ENCODE measurements at regions of chr3 and their contacts with region 1.

Region 1: DNA sequence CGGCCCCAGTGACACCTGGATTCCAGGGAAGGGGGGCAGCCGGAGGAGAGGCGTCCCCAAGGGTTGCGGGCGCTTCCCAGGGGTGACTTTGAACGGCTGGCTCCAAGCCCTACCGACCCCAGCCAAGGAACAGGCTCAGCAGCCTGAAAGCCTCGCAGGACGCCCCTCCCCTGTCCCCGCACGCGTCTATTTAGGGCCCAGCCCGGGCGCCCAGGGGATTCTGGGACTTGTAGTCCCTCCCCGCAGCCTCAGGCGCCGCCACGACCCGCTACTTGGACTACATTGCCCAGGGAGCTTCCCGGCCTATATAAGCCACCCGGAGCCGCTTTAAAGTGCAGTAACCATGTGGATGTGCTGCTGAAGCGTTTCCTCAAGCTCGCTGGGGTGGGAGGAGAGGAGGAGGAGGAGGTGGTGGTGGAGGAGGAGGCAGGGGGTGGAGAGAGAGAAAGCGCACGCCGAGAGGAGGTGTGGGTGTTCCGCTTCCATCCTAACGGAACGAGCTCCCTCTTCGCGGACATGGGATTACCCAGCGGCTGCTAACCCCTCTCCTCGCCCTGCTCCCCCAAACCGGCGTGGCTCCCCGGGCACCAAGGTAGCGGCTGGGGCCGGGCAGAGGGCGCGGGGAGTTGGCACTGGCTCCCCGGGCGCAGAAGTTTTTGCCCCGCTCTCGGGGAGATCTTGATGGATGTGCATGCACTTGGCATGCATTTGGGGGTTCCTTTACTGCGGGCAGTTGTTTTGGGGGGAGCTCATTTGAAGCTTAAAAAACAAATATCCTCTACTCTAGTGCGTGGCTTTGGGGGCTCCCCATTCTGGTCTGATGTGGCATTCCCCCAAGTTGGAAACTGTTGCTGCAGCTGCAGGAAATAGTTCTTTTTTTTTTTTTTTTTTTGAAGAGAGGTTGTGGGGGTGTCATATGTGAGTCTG is at the start of gene ITPR1:
- DNase-seq: peak; percentile 94 to 99 (median 98)
- ATAC-seq: peak; percentile 86 to 94 (median 90)
- H3K4me3 ChIP-seq: peak within 1 kb of the TSS; percentile 83 to 88
- H3K4me3 Mint-ChIP-seq: peak within 1 kb of the TSS; percentile 97 to 98 (median 97)
- H3K27ac ChIP-seq: peak within 1 kb of the TSS; percentile 64
- H3K27ac Mint-ChIP-seq: peak within 1 kb of the TSS; percentile 90 to 94
- H3K4me1 ChIP-seq: peaks cover 16 to 30% of the 10 kb centered on the region in 2 experiments
- H3K4me1 Mint-ChIP-seq: peaks cover 43 to 61% (median 47%) of the 10 kb centered on the region in 3 donors
- H3K27me3 ChIP-seq: no peaks in the 10 kb centered on the region
- H3K27me3 Mint-ChIP-seq: peaks cover 0 to 3% of the 10 kb centered on the region in 2 donors
- total RNA-seq, gene ITPR1: 53.8 to 105 (median 73.1) TPM

Region 2: GRCh38 chr3:3015185-3016089 is 1477.8 kb before region 1 on chr3:
- CTCF ChIA-PET with region 1: interaction called in 1 of 2 experiments, 12 read pairs
- POLR2A ChIA-PET with region 1: no interaction called
- DNase-seq: peak in 1 of 35 experiments; percentile 9
- ATAC-seq: no peak
- H3K4me3 ChIP-seq: no peak overlapping the region
- H3K4me3 Mint-ChIP-seq: no peak overlapping the region
- H3K27ac ChIP-seq: no peak overlapping the region
- H3K27ac Mint-ChIP-seq: no peak overlapping the region
- H3K4me1 ChIP-seq: no peaks in the 10 kb centered on the region
- H3K4me1 Mint-ChIP-seq: no peaks in the 10 kb centered on the region
- H3K27me3 ChIP-seq: no peaks in the 10 kb centered on the region
- H3K27me3 Mint-ChIP-seq: peaks cover 21 to 41% of the 10 kb centered on the region in 2 donors

Region 3: GRCh38 chr3:3851621-3852323 is 641.5 kb before region 1 on chr3:
- CTCF ChIA-PET with region 1: no interaction called
- POLR2A ChIA-PET with region 1: no interaction called
- DNase-seq: no peak
- ATAC-seq: no peak
- H3K4me3 ChIP-seq: no peak overlapping the region
- H3K4me3 Mint-ChIP-seq: no peak overlapping the region
- H3K27ac ChIP-seq: no peak overlapping the region
- H3K27ac Mint-ChIP-seq: no peak overlapping the region
- H3K4me1 ChIP-seq: no peaks in the 10 kb centered on the region
- H3K4me1 Mint-ChIP-seq: no peaks in the 10 kb centered on the region
- H3K27me3 ChIP-seq: no peaks in the 10 kb centered on the region
- H3K27me3 Mint-ChIP-seq: no peaks in the 10 kb centered on the region

Region 4: GRCh38 chr3:4310971-4311370 is 182.3 kb before region 1 on chr3:
- CTCF ChIA-PET with region 1: no interaction called
- POLR2A ChIA-PET with region 1: interaction called in 1 of 2 experiments, 10 read pairs
- DNase-seq: no peak
- ATAC-seq: no peak
- H3K4me3 ChIP-seq: no peak overlapping the region
- H3K4me3 Mint-ChIP-seq: no peak overlapping the region
- H3K27ac ChIP-seq: no peak overlapping the region
- H3K27ac Mint-ChIP-seq: peak overlapping the region in 1 of 2 donors; percentile 28
- H3K4me1 ChIP-seq: peaks cover 0 to under 1% of the 10 kb centered on the region in 2 experiments
- H3K4me1 Mint-ChIP-seq: peaks cover 12 to 21% (median 16%) of the 10 kb centered on the region in 3 donors
- H3K27me3 ChIP-seq: no peaks in the 10 kb centered on the region
- H3K27me3 Mint-ChIP-seq: no peaks in the 10 kb centered on the region

Region 5: DNA sequence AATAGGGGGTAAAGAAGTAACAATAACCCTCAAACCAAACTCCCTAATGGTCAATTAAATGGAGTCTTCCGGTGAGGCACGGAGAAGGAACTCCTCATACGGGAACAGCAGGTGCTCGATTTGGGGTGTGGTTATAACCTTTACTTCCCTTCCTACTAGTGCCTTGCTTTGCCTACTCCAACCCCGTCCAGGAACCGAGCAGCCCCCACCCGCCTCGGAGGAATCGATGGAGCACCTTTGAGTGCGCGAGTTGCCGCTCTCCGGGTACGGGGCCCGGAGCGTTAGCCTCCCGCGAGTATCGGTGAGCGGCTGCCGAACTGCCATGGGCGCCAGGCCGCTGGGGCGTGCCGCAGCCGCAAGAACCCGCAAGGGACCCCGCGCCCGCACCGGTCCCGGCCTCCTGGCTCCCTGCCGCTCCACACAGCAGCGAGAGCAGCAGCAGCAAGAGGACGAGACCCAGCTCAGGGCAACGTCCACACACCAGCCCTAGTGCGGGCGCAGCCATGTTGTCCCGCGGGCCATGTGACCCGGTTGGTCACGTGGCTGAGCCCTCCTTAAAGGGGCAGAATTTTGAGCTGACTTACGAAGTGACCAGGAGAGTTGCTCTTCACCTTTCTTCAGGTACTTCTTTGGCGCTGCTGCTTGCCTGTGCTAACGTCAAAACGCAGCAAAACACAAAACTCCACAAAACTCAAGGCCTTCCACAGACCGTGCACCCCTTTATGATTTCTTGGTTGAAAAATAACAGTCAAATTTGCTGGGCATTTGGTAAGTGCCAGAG is 26.3 kb before region 1 on chr3 and contains the start of gene SUMF1:
- CTCF ChIA-PET with region 1: interaction called, 8 to 11 read pairs
- POLR2A ChIA-PET with region 1: interaction called, 6 to 27 read pairs
- DNase-seq: peak; percentile 42 to 82 (median 63)
- ATAC-seq: peak; percentile 93 to 99 (median 97)
- H3K4me3 ChIP-seq: peak within 1 kb of the TSS; percentile 76 to 83
- H3K4me3 Mint-ChIP-seq: peak within 1 kb of the TSS; percentile 85 to 93 (median 92)
- H3K27ac ChIP-seq: peak within 1 kb of the TSS; percentile 65
- H3K27ac Mint-ChIP-seq: peak within 1 kb of the TSS; percentile 93 to 94
- H3K4me1 ChIP-seq: peaks cover 4 to 15% of the 10 kb centered on the region in 2 experiments
- H3K4me1 Mint-ChIP-seq: peaks cover 22 to 34% (median 27%) of the 10 kb centered on the region in 3 donors
- H3K27me3 ChIP-seq: peaks cover 0 to 5% of the 10 kb centered on the region in 2 experiments
- H3K27me3 Mint-ChIP-seq: peaks cover under 1% of the 10 kb centered on the region in 2 donors
- total RNA-seq, gene SUMF1: 15.5 to 20.8 (median 17.2) TPM

Region 6: DNA sequence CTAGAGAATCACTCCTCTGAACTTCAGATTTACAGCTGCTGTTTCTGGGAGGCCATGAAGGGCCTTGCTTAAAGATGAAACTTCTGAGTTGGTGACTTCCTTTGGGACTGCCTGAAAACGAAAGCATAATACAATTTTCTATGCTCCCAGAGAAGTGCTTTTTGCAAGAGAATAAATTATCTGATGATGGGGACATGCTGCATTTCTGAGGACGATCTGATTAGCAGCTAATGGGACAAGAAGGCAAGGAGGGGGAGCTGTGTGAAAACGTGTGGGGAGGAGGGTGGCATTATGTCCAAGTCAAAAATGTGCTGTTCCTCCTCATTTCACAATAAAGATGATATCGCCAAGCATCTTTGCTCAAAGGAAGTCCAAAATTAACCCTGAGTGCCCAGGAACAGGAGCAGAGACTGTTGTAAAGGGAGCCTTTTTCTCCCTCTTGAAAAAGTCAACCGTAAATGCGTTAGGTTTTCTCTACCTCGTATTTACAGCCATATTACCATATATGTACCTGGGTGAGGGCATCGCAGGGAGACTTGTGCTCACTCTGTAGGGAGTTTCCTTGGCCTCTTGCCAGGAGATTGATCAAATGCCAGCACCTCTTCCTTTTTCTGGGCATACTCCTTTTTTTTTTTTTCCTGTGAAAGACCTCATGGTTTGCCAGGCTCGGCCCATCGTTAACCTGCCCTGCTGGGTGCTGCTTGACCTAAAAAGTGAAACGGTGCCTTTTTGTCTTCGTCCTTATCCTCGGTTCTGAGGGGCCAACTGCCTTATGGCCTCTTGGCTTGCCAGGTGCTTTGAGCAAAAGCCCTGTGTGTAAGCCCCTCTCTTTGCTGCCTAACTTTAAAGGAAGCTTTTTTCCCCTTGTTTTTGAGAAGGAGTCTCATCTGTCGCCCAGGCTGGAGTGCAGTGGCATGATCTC is 11.3 kb after region 1 on chr3:
- CTCF ChIA-PET with region 1: interaction called, 8 to 11 read pairs
- POLR2A ChIA-PET with region 1: interaction called, 16 to 29 read pairs
- DNase-seq: peak in 22 of 35 experiments; percentile 12 to 82 (median 25)
- ATAC-seq: peak; percentile 81 to 89 (median 82)
- H3K4me3 ChIP-seq: peak overlapping the region; percentile 44 to 49
- H3K4me3 Mint-ChIP-seq: peak overlapping the region; percentile 0 to 84 (median 82)
- H3K27ac ChIP-seq: peak overlapping the region; percentile 89
- H3K27ac Mint-ChIP-seq: peak overlapping the region; percentile 98
- H3K4me1 ChIP-seq: peaks cover 9 to 27% of the 10 kb centered on the region in 2 experiments
- H3K4me1 Mint-ChIP-seq: peaks cover 22 to 65% (median 51%) of the 10 kb centered on the region in 3 donors
- H3K27me3 ChIP-seq: no peaks in the 10 kb centered on the region
- H3K27me3 Mint-ChIP-seq: no peaks in the 10 kb centered on the region

Region 7: GRCh38 chr3:4517643-4518311 is 24.5 kb after region 1 on chr3:
- CTCF ChIA-PET with region 1: interaction called, 12 to 49 read pairs
- POLR2A ChIA-PET with region 1: interaction called, 12 to 35 read pairs
- DNase-seq: no peak
- ATAC-seq: peak in 2 of 4 experiments; percentile 14 to 35
- H3K4me3 ChIP-seq: no peak overlapping the region
- H3K4me3 Mint-ChIP-seq: peak overlapping the region in 1 of 3 donors; percentile 63
- H3K27ac ChIP-seq: peak overlapping the region; percentile 85
- H3K27ac Mint-ChIP-seq: peak overlapping the region; percentile 76 to 90
- H3K4me1 ChIP-seq: peaks cover 15 to 25% of the 10 kb centered on the region in 2 experiments
- H3K4me1 Mint-ChIP-seq: peaks cover 47 to 50% (median 48%) of the 10 kb centered on the region in 3 donors
- H3K27me3 ChIP-seq: no peaks in the 10 kb centered on the region
- H3K27me3 Mint-ChIP-seq: no peaks in the 10 kb centered on the region

Region 8: DNA sequence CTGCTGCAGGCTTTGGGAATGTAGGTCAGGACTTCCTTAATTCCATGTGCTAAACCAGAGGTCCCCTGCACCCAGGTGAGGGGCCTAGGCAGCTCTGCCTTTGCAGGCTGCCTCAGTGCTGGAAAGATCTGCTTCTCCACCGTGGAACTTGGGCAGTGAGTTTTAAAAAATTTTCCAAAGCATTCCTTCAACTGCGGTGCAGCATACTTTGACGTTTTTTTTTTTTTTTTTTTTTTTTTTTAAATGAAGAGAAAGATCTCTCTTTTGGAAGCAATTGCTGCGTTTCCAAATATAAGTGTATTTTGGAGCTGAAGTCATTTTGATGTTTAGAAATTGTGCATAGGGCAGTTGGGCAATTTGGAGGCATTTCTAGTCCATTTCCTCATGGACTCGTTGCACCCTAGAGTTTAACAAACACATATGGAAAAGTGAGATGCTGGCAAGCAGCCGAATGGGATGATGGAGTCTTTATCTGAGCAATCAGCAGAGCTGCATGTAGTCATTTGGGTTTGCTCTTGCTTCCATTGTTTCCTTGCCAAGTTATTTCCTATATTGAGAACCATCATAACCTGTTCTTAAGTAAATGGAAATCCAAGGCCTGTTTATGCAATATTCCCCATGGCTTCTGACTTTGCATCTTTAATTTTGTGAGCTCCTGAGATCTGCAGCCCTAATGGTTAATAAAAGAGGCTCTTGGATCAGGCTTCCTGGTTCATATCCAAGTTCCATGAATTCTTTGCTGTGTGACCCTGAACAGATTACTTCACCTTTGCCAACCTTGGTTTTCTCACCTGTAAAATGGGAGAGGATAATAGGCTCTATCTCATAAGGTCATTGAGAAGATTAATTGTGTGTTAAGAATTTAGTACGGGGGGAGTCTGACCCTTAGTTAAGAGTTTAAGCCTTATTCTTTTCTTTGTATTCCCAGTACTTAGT is 31.1 kb after region 1 on chr3:
- CTCF ChIA-PET with region 1: interaction called, 12 to 49 read pairs
- POLR2A ChIA-PET with region 1: interaction called, 12 to 35 read pairs
- DNase-seq: no peak
- ATAC-seq: no peak
- H3K4me3 ChIP-seq: no peak overlapping the region
- H3K4me3 Mint-ChIP-seq: no peak overlapping the region
- H3K27ac ChIP-seq: no peak overlapping the region
- H3K27ac Mint-ChIP-seq: no peak overlapping the region
- H3K4me1 ChIP-seq: peaks cover under 1 to 4% of the 10 kb centered on the region in 2 experiments
- H3K4me1 Mint-ChIP-seq: peaks cover 18 to 33% (median 31%) of the 10 kb centered on the region in 3 donors
- H3K27me3 ChIP-seq: no peaks in the 10 kb centered on the region
- H3K27me3 Mint-ChIP-seq: no peaks in the 10 kb centered on the region